ENCODE measurements at regions of chr6 and their contacts with region 1.

Region 1: GRCh38 chr6:163427498-163428254 is 13.2 kb downstream of the QKI start:
- DNase-seq: no peak
- ATAC-seq: peak; percentile 52

Region 2: DNA sequence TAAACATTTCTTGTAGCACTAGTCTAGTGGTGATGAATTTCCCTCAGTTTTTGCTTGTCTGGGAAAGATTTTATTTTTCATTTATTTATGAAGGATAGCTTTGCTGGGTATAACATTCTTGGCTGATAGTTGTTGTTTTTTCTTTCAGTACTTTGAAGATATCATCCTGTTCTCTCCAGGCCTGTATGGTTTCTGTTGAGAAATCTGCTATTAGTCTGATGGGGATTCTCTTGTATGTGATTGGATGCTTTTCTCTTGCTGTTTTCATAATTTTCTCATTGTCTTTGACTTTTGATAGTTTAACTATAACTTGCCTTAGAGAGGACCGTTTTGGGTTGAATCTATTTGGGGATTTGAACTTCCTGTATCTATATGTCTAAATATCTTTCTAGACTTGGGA is 492.8 kb before region 1 on chr6:
- intact Hi-C with region 1: no loop called
- DNase-seq: no peak
- ATAC-seq: no peak

Region 3: DNA sequence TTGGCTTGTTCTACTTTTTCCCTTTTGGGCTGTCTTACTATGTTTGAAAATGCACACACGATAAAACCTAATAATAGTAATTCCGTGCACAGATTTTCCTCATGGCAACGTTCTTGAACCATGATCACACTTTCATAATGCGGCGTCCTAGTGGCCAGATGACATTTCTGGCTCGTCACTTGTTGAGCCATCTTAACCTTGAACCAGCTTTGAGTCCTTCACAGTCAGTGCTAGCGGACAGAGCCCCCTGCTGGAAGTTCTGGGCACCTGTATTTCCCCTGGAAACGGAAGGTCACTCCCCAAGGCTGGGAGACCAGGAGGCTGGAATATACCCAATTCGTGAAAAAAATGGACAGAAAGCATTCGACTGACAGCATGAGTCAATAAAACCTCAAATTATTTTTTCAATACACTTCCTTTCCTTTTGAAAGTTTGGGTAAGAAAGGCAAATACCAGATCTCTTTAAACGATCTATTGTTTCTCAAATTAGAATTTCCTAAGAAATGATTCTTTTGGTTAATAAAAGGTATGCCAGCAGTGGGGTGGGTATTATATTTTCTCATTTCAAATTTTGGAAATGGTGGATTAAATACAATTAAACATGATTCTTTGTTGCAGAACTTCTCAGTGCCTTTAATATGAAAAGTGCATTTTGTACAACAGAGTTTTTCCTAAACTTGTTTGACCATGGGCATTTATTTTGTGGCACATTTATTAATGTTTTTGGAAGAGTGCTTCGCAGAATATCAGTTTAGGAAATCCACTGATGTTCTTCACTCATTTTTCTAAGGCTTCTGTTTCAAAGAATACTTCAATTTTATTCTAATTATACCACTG is 529.1 kb after region 1 on chr6:
- intact Hi-C with region 1: loop called in 1 of 2 experiments (anchors 5 kb)
- DNase-seq: peak; percentile 49 to 72
- ATAC-seq: peak; percentile 80

Region 4: GRCh38 chr6:164106345-164106769 is 678.7 kb after region 1 on chr6:
- intact Hi-C with region 1: loop called in 1 of 2 experiments (anchors 10 kb)
- DNase-seq: no peak
- ATAC-seq: no peak